Dorsolateral prefrontal cortex (tissue), 120 donors: ENCODE measurements at regions of chr3 and their contacts with region 1.

Region 1: DNA sequence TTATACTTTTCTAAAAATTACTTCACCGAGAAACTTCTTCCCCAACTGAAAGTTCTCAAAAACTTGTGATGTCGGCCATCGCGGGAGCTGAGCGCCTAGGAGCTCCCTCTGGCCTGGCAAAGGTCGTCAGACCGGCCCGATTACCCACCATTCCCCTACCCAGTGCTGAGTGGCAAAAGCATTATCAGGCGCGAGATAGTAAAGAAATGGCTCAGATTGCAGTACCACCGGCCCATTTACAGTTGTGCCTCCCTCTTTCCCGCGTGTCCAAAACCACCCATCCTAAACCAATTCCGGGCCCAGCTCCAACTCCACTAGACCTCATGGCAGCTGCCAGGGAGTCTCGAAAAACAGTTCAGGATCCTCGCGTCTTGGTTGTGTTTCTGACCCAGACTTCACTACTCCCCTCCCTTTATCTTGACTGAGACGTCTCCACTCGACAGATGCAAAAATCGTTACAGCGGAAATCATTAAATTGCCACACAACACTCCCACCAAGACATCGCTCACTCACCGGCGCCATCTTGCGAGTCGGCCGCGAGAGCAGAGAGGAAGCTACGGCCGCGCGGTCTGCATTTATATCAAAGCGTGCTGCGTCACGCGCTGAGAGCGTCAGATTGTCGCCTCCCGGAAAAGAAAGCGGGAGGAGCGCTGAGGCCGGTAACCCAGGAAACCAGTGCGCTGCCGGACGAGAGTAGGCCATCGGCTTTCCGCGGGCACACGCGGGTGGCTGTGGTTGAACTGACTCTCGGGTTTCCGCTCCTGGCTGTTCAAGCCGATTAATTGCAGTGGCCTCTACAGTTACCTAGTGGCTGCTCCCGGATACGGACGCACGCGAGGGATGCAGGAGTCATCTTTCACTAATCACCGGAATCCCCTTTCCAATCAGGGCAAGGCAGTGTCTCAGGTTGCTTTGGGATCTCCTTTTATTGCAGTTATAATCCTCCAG is at the start of gene RPL22L1:
- DNase-seq: peak; percentile 91 to 97 (median 95)
- H3K4me3 ChIP-seq: peak within 1 kb of the TSS; percentile 58 to 88 (median 75)
- H3K27ac ChIP-seq: peak within 1 kb of the TSS; percentile 9 to 93 (median 82)
- H3K27me3 ChIP-seq: no peaks in the 10 kb centered on the region
- CTCF ChIP-seq: peak in 55 of 56 donors; percentile 13 to 73 (median 47)
- total RNA-seq, gene RPL22L1: 4.5 to 20.8 (median 10.7) TPM

Region 2: GRCh38 chr3:170908235-170909116 is 38.6 kb after region 1 on chr3 and contains the start of gene EIF5A2:
- intact Hi-C with region 1: loop called (anchors 2 to 5 kb)
- DNase-seq: peak; percentile 34 to 97 (median 92)
- H3K4me3 ChIP-seq: peak within 1 kb of the TSS; percentile 51 to 91 (median 79)
- H3K27ac ChIP-seq: peak within 1 kb of the TSS in 24 of 59 donors; percentile 0 to 76 (median 58)
- H3K27me3 ChIP-seq: no peaks in the 10 kb centered on the region
- CTCF ChIP-seq: peak in 3 of 56 donors; percentile 9 to 33 (median 20)
- total RNA-seq, gene EIF5A2: 9.9 to 61.9 (median 29.6) TPM

Region 3: DNA sequence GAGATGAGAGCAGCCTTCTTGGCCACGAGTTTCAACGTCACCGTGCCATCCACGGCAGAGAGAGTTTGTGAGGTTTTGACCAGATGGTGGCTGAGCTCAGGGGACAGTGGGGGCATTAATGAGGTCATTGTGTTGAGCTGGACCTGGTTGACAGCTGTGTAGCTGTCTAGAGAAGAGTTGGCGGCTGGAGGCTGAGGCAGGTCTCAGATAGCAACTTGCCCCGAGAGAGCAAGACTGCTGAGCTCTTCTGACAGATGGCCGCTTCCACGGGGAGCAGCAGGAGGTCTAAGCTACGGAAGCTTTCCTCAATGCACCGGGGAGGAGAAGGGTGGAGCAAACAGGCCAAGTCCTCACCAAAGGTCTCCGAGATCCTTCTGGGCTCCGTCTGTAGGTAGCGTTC is 83.3 kb after region 1 on chr3:
- intact Hi-C with region 1: loop called in 1 of 2 experiments (anchors 5 kb)
- DNase-seq: no peak
- H3K4me3 ChIP-seq: peak overlapping the region in 57 of 59 donors; percentile 2 to 66 (median 49)
- H3K27ac ChIP-seq: peak overlapping the region in 55 of 59 donors; percentile 24 to 91 (median 72)
- H3K27me3 ChIP-seq: no peaks in the 10 kb centered on the region
- CTCF ChIP-seq: no peak